Breast epithelium (tissue), 4 donors: ENCODE measurements at regions of chr18 and their contacts with region 1.

Region 1: DNA sequence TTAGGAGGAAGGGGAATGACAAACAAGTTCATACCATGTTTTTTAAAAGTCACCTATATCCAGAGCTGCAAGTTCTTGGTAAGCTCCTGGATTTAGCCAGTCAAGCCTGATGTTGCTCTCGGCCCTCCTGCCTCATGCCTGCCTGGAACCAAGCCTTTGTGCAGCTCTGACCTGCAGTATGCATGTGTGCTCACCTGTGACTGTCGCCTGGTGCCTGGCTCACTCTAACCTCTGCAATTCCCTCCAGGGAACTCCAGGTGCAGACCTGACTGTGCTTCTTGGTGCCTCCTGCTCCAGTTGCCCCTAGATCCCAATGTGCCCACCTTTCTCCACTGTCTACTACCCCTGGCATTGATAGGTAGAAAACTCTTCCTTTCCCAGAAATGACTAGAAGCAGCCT is 85.1 kb upstream of the ZBTB14 start:
- DNase-seq: no peak
- H3K4me3 ChIP-seq: no peak overlapping the region
- H3K27ac ChIP-seq: no peak overlapping the region
- H3K4me1 ChIP-seq: no peaks in the 10 kb centered on the region
- H3K27me3 ChIP-seq: no peaks in the 10 kb centered on the region
- CTCF ChIP-seq: no peak
- POLR2A ChIP-seq: no peak

Region 2: GRCh38 chr18:5311301-5311989 is 69.1 kb before region 1 on chr18:
- intact Hi-C with region 1: no loop called
- DNase-seq: no peak
- H3K4me3 ChIP-seq: no peak overlapping the region
- H3K27ac ChIP-seq: no peak overlapping the region
- H3K4me1 ChIP-seq: no peaks in the 10 kb centered on the region
- H3K27me3 ChIP-seq: no peaks in the 10 kb centered on the region
- CTCF ChIP-seq: no peak
- POLR2A ChIP-seq: no peak

Region 3: GRCh38 chr18:5417342-5417741 is 36.8 kb after region 1 on chr18:
- intact Hi-C with region 1: no loop called
- DNase-seq: no peak
- H3K4me3 ChIP-seq: no peak overlapping the region
- H3K27ac ChIP-seq: no peak overlapping the region
- H3K4me1 ChIP-seq: no peaks in the 10 kb centered on the region
- H3K27me3 ChIP-seq: no peaks in the 10 kb centered on the region
- CTCF ChIP-seq: no peak
- POLR2A ChIP-seq: no peak

Region 4: GRCh38 chr18:5759194-5759593 is 378.6 kb after region 1 on chr18:
- intact Hi-C with region 1: loop called (anchors 10 kb)
- DNase-seq: no peak
- H3K4me3 ChIP-seq: peak overlapping the region in 2 of 3 donors; percentile 24 to 48
- H3K27ac ChIP-seq: no peak overlapping the region
- H3K4me1 ChIP-seq: no peaks in the 10 kb centered on the region
- H3K27me3 ChIP-seq: peaks cover 0 to 10% of the 10 kb centered on the region in 2 donors
- CTCF ChIP-seq: no peak
- POLR2A ChIP-seq: no peak